ENCODE measurements at regions of chr18 and their contacts with region 1.

Region 1: DNA sequence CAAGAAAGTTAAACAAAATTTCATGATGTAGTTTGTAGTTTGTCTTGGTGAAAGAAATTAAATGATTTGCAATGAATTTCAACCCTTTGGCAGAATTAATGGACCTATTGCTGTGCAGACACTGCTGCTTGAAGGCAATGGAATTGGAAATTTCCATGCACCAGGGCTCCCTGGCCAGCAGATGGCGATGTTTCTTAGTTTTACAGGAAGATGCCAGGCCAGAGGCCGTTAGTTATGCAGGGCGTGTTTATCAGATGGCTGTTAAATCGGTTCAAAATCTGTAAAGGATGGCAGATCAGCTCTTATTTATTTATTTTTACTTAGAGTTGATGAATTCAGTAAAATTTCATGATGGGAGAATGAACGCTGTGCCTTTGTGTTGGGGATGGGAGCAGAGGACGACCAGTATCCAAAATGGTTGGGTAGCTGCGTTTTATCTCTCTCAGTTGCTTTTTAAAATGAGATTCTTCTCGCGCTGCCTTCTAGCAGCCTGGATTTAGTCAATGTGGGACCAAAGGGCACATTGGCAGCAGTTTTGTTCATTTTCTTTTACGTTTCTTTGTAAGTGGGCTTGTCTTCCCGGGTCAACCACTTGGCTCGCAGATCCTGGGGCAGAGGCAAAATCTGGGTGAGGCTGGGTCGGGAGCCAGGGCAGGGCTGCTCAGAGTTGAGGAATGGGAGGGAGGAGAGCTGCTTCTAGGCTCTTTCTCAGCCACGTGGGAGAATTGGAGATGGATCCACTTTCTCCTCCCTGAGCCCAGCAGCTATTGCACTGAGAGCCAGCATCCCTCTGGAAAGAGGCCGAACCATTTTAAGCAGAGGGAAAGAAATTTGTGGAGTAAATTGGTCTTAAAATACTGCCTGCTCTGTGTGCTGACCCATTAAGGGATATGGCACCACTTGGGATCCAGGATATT is 344.0 kb downstream of the PIK3C3 start:
- DNase-seq: peak; percentile 62
- H3K4me3 ChIP-seq: no peak overlapping the region
- H3K27ac ChIP-seq: no peak overlapping the region
- H3K4me1 ChIP-seq: no peaks in the 10 kb centered on the region; a peak in 1 of 4 replicates
- H3K27me3 ChIP-seq: no peaks in the 10 kb centered on the region
- CTCF ChIP-seq: peak; percentile 96
- EP300 ChIP-seq: peak in 1 of 2 experiments; percentile 33; a peak in 1 of 4 replicates
- RAD21 ChIP-seq: peak; percentile 93

Region 2: DNA sequence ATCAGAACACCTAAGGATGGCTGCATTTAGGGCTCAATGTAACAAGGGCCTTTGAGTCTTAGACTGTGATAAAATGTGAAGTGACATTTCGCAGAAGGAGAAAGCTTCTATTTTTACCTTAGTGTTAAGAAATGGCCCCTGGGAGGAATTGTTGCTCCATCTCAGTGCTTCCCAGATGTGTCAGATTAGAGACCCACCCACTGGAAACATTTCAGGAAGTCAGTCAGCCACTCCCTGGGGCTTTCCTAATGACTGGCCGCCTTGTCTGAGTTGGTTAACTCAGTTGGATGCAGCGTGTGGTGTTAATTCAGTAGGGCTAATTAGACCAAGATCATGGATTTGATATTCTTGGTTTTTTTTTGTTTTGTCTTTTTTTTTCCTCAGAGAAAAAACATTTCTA is 11.9 kb after region 1 on chr18:
- CTCF ChIA-PET with region 1: interaction called, 25 read pairs
- POLR2A ChIA-PET with region 1: no interaction called
- DNase-seq: no peak
- H3K4me3 ChIP-seq: no peak overlapping the region
- H3K27ac ChIP-seq: no peak overlapping the region
- H3K4me1 ChIP-seq: peaks cover 0 to 2% of the 10 kb centered on the region in 2 experiments; a peak in 1 of 4 replicates
- H3K27me3 ChIP-seq: no peaks in the 10 kb centered on the region
- CTCF ChIP-seq: no peak
- EP300 ChIP-seq: no peak
- RAD21 ChIP-seq: no peak

Region 3: GRCh38 chr18:43271593-43272432 is 972.8 kb after region 1 on chr18:
- CTCF ChIA-PET with region 1: interaction called, 62 read pairs
- POLR2A ChIA-PET with region 1: no interaction called
- DNase-seq: peak; percentile 10
- H3K4me3 ChIP-seq: no peak overlapping the region
- H3K27ac ChIP-seq: no peak overlapping the region
- H3K4me1 ChIP-seq: peaks cover 0 to 6% of the 10 kb centered on the region in 2 experiments; a peak in 1 of 4 replicates
- H3K27me3 ChIP-seq: no peaks in the 10 kb centered on the region
- CTCF ChIP-seq: peak; percentile 74
- EP300 ChIP-seq: no peak
- RAD21 ChIP-seq: peak; percentile 89

Region 4: GRCh38 chr18:43396266-43396665 is 1097.2 kb after region 1 on chr18:
- CTCF ChIA-PET with region 1: interaction called, 37 read pairs
- POLR2A ChIA-PET with region 1: no interaction called
- DNase-seq: peak; percentile 10
- H3K4me3 ChIP-seq: no peak overlapping the region
- H3K27ac ChIP-seq: no peak overlapping the region
- H3K4me1 ChIP-seq: no peaks in the 10 kb centered on the region; a peak in 2 of 4 replicates
- H3K27me3 ChIP-seq: no peaks in the 10 kb centered on the region
- CTCF ChIP-seq: peak; percentile 59
- EP300 ChIP-seq: no peak
- RAD21 ChIP-seq: peak; percentile 83